Tibial artery (tissue), 4 donors: ENCODE measurements at regions of chr2 and their contacts with region 1.

Region 1: DNA sequence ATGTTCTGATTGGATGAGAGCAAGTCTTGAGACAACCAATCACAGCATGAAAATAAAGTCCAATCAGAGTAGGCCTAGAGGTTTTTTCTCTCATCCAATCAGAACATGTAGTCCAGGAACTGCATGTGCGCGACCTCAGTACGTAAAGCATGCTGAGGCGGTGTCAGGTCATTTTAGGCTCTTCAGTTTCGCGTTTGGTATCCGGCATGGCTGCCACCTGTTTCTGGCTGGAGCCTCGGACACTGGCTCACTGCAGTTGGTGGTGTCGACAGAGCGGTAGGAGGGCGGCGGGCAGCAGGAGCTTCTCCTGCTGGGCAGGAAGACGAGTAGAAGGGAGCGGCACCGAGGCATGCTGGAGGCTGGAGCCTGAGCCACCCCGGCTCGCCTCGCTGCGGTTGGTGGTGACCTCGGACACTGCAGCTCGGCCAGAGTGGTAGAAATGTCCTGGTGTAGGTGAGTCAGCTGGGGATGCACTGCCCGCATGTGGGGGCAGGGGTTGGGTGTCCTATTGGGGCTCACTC is 15.7 kb downstream of the CCDC74A start:
- DNase-seq: peak in 1 of 2 donors; percentile 40
- H3K4me3 ChIP-seq: no peak overlapping the region
- H3K27ac ChIP-seq: no peak overlapping the region
- H3K4me1 ChIP-seq: no peaks in the 10 kb centered on the region
- H3K27me3 ChIP-seq: no peaks in the 10 kb centered on the region
- CTCF ChIP-seq: no peak

Region 2: DNA sequence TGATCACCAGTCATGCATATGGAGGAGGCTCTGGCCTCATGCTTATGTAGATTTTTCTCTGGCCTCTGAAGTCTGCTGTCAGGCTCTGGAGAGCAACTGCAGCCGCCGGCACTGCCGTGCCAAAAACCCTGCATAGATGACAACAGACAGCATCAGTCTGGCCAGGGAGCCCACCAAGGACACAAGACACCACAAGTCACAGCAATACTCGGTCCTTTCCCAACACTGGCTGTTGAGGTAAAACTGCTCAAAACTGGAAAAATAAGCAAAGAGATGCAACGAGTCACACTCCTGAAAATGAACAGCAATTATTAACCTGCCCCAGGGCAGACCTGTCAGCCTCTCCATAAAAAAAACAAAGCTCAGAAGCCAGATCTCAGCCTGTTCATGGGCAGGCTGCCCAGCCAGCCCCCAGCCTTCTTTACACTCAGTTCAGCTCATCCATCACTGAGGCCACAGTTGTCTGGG is 1750.0 kb before region 1 on chr2:
- intact Hi-C with region 1: loop called (anchors 10 kb)
- DNase-seq: no peak
- H3K4me3 ChIP-seq: no peak overlapping the region
- H3K27ac ChIP-seq: no peak overlapping the region
- H3K4me1 ChIP-seq: no peaks in the 10 kb centered on the region
- H3K27me3 ChIP-seq: peaks cover 0 to 5% of the 10 kb centered on the region in 2 donors
- CTCF ChIP-seq: no peak

Region 3: GRCh38 chr2:131521961-131522794 is 21.3 kb before region 1 on chr2:
- intact Hi-C with region 1: no loop called
- DNase-seq: no peak
- H3K4me3 ChIP-seq: no peak overlapping the region
- H3K27ac ChIP-seq: no peak overlapping the region
- H3K4me1 ChIP-seq: peaks cover 0 to 2% (median 0%) of the 10 kb centered on the region in 4 donors
- H3K27me3 ChIP-seq: no peaks in the 10 kb centered on the region
- CTCF ChIP-seq: no peak